Cardiac septum (tissue), 1 donor: ENCODE measurements at regions of chr19 and their contacts with region 1.

Region 1: DNA sequence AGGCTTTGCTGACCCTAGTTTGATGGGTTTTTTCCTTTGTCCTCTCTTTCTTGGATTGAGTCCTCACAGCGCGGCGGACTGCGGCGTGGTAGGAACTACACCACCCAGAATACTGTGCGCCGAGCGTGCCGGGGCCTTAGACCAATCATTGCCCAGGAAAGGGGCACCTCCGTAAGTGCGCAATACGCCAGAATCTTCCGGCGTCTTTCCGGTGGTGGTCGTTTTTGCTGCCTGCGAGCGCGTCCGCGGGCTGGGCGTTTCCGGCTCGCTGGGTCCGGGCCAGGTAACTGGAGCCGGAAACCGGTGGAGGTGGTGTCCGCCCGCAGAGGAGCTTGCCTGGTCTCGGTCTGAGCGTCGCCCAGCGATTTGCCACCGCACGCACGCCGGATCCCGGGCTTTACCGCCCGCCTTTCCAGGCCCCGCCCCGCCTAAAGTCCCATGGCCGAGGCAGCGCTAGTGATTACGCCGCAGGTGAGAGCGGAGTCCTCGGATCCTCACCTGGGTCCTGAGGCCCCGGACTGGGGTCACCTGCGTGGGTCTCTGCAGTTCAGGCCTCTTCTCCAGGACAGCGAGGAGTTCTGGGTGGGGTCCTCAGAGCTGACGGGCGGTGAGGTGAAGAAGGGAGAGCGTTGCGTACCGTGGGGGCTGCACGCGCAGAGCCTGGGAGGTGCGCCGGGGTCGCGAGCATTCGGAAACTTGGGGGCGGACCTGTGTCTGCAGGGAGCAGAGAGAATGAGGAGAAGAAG is at the start of gene ZNF549:
- DNase-seq: peak; percentile 93
- total RNA-seq, gene ZNF549: 3.6 TPM

Region 2: GRCh38 chr19:57245959-57246358 is 281.4 kb before region 1 on chr19:
- intact Hi-C with region 1: no loop called
- DNase-seq: peak; percentile 22

Region 3: DNA sequence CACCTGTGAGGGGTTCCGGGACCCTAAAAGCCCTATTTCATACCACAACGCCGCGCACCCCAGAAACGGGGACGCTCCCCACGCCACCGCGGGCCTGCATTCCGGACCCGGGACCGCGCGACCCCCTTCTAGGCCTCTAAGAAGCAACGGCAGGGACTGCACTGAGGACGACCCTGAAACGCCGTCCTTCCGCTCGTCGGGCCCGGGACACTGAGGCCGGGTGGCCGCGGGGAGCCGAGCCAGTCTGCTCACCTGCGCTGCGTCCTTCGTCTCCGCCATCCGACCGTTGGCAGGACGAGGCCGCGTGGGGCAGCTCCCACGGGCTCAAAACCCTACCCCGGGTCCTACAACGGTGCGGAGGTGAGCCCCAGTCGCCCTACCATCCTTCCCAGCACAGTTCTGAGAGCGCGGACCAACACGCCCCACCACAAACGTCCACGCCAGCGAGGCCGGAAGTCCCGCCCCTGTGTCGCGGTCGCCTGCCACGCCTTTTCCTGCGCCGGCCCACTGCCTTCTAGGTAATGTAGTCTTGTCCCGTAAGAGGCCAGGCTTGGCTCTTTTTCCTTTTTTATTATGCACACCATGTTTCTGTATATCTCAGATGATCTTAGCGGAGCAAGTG is 32.2 kb after region 1 on chr19 and contains the start of gene ZNF550:
- intact Hi-C with region 1: loop called (anchors 2 kb)
- DNase-seq: peak; percentile 94
- total RNA-seq, gene ZNF550: 9.9 TPM